Endothelial cell of umbilical vein (primary cell): ENCODE measurements at regions of chr12 and their contacts with region 1.

Region 1: GRCh38 chr12:569803-570434 is 93.3 kb downstream of the NINJ2 start:
- DNase-seq: peak; percentile 58
- H3K4me3 ChIP-seq: peak overlapping the region; percentile 36 to 81 (median 67)
- H3K27ac ChIP-seq: peak overlapping the region; percentile 77
- H3K4me1 ChIP-seq: peaks cover 23% of the 10 kb centered on the region
- H3K27me3 ChIP-seq: peaks cover 2 to 3% of the 10 kb centered on the region in 2 experiments
- CTCF ChIP-seq: peak; percentile 79 to 97
- POLR2A ChIP-seq: no peak

Region 2: GRCh38 chr12:538731-539539 is 31.0 kb before region 1 on chr12:
- CTCF ChIA-PET with region 1: no interaction called
- POLR2A ChIA-PET with region 1: no interaction called
- dilution Hi-C with region 1: no loop called
- intact Hi-C with region 1: no loop called
- DNase-seq: peak; percentile 80
- H3K4me3 ChIP-seq: no peak overlapping the region
- H3K27ac ChIP-seq: no peak overlapping the region
- H3K4me1 ChIP-seq: peaks cover 10% of the 10 kb centered on the region
- H3K27me3 ChIP-seq: peaks cover 14 to 15% of the 10 kb centered on the region in 2 experiments
- CTCF ChIP-seq: no peak
- POLR2A ChIP-seq: no peak

Region 3: GRCh38 chr12:549476-550082 is 20.3 kb before region 1 on chr12:
- CTCF ChIA-PET with region 1: no interaction called
- POLR2A ChIA-PET with region 1: no interaction called
- dilution Hi-C with region 1: no loop called
- intact Hi-C with region 1: no loop called
- DNase-seq: no peak
- H3K4me3 ChIP-seq: no peak overlapping the region
- H3K27ac ChIP-seq: no peak overlapping the region
- H3K4me1 ChIP-seq: peaks cover 8% of the 10 kb centered on the region
- H3K27me3 ChIP-seq: peaks cover 0 to 13% of the 10 kb centered on the region in 2 experiments
- CTCF ChIP-seq: no peak
- POLR2A ChIP-seq: no peak

Region 4: GRCh38 chr12:591167-592023 is 21.5 kb after region 1 on chr12:
- CTCF ChIA-PET with region 1: no interaction called
- POLR2A ChIA-PET with region 1: no interaction called
- dilution Hi-C with region 1: no loop called
- intact Hi-C with region 1: no loop called
- DNase-seq: no peak
- H3K4me3 ChIP-seq: no peak overlapping the region
- H3K27ac ChIP-seq: no peak overlapping the region
- H3K4me1 ChIP-seq: no peaks in the 10 kb centered on the region
- H3K27me3 ChIP-seq: peaks cover 3 to 7% of the 10 kb centered on the region in 2 experiments
- CTCF ChIP-seq: no peak
- POLR2A ChIP-seq: no peak

Region 5: GRCh38 chr12:642633-643474 is 72.9 kb after region 1 on chr12:
- CTCF ChIA-PET with region 1: interaction called, 7 read pairs
- POLR2A ChIA-PET with region 1: no interaction called
- dilution Hi-C with region 1: no loop called
- intact Hi-C with region 1: loop called (anchors 2 kb)
- DNase-seq: peak; percentile 52
- H3K4me3 ChIP-seq: peak overlapping the region in 1 of 3 experiments; percentile 40
- H3K27ac ChIP-seq: peak overlapping the region; percentile 87
- H3K4me1 ChIP-seq: peaks cover 41% of the 10 kb centered on the region
- H3K27me3 ChIP-seq: no peaks in the 10 kb centered on the region
- CTCF ChIP-seq: peak; percentile 1 to 35
- POLR2A ChIP-seq: peak; percentile 66

Region 6: DNA sequence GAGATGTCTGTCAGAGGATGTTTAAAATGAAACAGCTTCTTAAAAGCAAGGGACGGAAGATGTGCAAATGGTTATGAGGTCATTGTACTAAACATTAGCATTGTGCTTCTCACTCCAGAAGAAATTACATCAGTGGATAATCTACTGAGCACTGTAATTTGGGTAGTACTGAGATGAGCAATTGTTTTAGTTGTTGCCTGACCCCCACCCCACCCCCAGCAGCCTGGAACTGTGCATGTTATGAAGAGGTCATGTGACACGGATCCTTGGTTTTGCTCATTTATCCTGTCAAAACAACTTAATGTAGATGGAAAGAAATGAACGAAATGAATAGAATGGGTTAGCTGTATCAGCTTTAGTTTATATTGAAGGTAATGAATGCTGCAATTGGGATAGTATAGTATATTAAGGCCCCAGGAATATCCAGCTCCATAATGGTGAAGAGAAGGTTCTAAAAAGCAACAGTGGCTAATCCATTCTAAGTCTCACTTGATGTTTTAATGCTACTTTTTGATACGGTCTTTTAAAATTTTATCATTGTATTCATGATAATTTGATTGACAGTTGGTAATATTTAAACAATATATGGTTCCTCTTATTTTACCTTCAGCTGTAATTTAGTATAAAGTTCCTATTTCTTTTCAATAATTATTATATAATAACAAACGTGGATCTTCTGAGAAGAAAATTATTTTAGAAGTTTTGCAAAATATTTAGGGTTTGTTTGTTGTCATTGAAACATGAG is 240.9 kb after region 1 on chr12:
- CTCF ChIA-PET with region 1: interaction called, 47 read pairs
- POLR2A ChIA-PET with region 1: no interaction called
- dilution Hi-C with region 1: no loop called
- intact Hi-C with region 1: loop called (anchors 1 kb)
- DNase-seq: no peak
- H3K4me3 ChIP-seq: no peak overlapping the region
- H3K27ac ChIP-seq: no peak overlapping the region
- H3K4me1 ChIP-seq: peaks cover 13% of the 10 kb centered on the region
- H3K27me3 ChIP-seq: no peaks in the 10 kb centered on the region
- CTCF ChIP-seq: no peak
- POLR2A ChIP-seq: no peak

Region 7: DNA sequence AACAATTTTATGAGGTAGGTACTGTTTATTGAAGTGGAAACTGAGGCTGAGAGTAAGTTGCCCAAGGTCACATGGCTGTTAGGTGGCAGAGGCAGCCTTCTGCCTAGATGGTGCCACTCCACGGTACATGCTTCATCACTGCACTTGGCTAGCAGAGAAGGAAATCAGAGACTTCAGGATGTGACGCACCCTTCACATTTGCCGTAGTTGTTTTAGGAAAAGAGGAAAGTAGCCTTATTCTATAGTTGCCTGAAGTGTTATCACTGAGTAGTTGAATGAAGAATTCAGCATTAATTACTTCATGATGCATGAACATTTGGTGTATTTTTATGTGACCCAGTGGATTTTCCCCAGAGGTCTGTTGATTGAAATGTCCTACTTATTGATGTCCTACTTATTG is 476.8 kb after region 1 on chr12:
- CTCF ChIA-PET with region 1: no interaction called
- POLR2A ChIA-PET with region 1: no interaction called
- dilution Hi-C with region 1: no loop called
- intact Hi-C with region 1: loop called (anchors 1 kb)
- DNase-seq: peak; percentile 83
- H3K4me3 ChIP-seq: no peak overlapping the region
- H3K27ac ChIP-seq: peak overlapping the region; percentile 68
- H3K4me1 ChIP-seq: peaks cover 52% of the 10 kb centered on the region
- H3K27me3 ChIP-seq: no peaks in the 10 kb centered on the region
- CTCF ChIP-seq: no peak
- POLR2A ChIP-seq: no peak